Activated CD4-positive, alpha-beta memory T cell treated with anti-CD3 and anti-CD28 coated beads for 36 hours (primary cell): ENCODE measurements at regions of chr20 and their contacts with region 1.

Region 1: GRCh38 chr20:44217342-44218092 is 6.9 kb upstream of the OSER1 start:
- DNase-seq: peak; percentile 76
- H3K4me3 Mint-ChIP-seq: peak overlapping the region; percentile 66
- H3K27ac Mint-ChIP-seq: peak overlapping the region; percentile 68
- H3K4me1 Mint-ChIP-seq: peaks cover 47% of the 10 kb centered on the region
- H3K27me3 Mint-ChIP-seq: no peaks in the 10 kb centered on the region

Region 2: GRCh38 chr20:44271915-44272663 is 54.6 kb after region 1 on chr20:
- CTCF ChIA-PET with region 1: interaction called, 25 read pairs
- POLR2A ChIA-PET with region 1: no interaction called
- intact Hi-C with region 1: no loop called
- DNase-seq: peak; percentile 25
- H3K4me3 Mint-ChIP-seq: no peak overlapping the region
- H3K27ac Mint-ChIP-seq: no peak overlapping the region
- H3K4me1 Mint-ChIP-seq: no peaks in the 10 kb centered on the region
- H3K27me3 Mint-ChIP-seq: no peaks in the 10 kb centered on the region

Region 3: DNA sequence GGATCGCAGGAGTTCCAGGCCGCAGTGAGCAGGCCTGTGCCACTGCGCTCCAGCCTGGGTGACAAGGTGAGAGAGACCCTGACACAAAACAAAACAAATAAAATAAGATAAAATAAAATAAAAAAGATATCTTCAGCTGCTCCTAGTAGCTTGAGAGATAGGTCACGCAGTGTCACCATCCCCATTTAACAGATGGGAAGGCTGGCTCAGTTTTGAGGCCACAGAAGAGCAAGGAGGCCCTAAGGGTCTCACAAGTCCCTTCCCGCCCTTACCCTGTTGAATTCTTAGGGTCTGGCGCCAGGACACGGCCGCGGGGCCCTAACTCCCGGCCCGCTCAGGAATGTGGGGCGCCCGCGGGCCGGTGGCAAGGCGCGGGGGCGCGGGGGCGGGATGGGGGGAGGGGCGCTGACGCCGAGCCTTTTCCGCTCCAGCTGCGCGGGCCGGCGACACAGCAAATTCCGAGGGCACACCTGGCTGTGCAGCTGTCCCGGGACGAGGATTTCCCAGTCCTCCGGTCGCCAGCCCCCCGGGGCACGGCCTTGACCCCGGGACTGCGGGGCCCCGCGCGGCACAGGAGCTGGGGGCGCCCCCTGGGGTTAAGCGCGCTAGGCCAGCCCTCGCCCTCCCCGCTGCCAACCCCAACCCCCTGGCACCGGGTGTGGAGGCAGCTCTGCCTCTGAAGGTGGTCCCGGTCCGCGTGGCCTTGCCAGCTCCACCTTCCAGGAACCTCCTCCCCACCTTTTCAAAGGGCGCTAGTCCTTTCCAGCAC is 109.1 kb after region 1 on chr20:
- CTCF ChIA-PET with region 1: interaction called, 14 read pairs
- POLR2A ChIA-PET with region 1: no interaction called
- intact Hi-C with region 1: no loop called
- DNase-seq: peak; percentile 37
- H3K4me3 Mint-ChIP-seq: no peak overlapping the region
- H3K27ac Mint-ChIP-seq: no peak overlapping the region
- H3K4me1 Mint-ChIP-seq: no peaks in the 10 kb centered on the region
- H3K27me3 Mint-ChIP-seq: peaks cover 5% of the 10 kb centered on the region

Region 4: GRCh38 chr20:44609511-44610312 is 392.2 kb after region 1 on chr20:
- CTCF ChIA-PET with region 1: interaction called, 30 read pairs
- POLR2A ChIA-PET with region 1: interaction called, 3 read pairs
- intact Hi-C with region 1: no loop called
- DNase-seq: peak; percentile 87
- H3K4me3 Mint-ChIP-seq: no peak overlapping the region
- H3K27ac Mint-ChIP-seq: peak overlapping the region; percentile 52
- H3K4me1 Mint-ChIP-seq: peaks cover 8% of the 10 kb centered on the region
- H3K27me3 Mint-ChIP-seq: no peaks in the 10 kb centered on the region

Region 5: GRCh38 chr20:44733341-44734069 is 516.0 kb after region 1 on chr20:
- CTCF ChIA-PET with region 1: no interaction called
- POLR2A ChIA-PET with region 1: no interaction called
- intact Hi-C with region 1: loop called (anchors 5 kb)
- DNase-seq: peak; percentile 76
- H3K4me3 Mint-ChIP-seq: no peak overlapping the region
- H3K27ac Mint-ChIP-seq: no peak overlapping the region
- H3K4me1 Mint-ChIP-seq: peaks cover 23% of the 10 kb centered on the region
- H3K27me3 Mint-ChIP-seq: no peaks in the 10 kb centered on the region